Activated T-helper 1 cell treated with anti-CD3 and anti-CD28 coated beads, Interleukin-12 subunit alpha, Interleukin-12 subunit beta, Interleukin-2, Interleukin-4 antibody, amounts not matched to agents 30 ng/mL and 10 ng/mL and 1 ng/mL, durations not matched to agents 14 hours and 24 hours and 36 hours (primary cell): ENCODE measurements at regions of chr19 and their contacts with region 1.

Region 1: DNA sequence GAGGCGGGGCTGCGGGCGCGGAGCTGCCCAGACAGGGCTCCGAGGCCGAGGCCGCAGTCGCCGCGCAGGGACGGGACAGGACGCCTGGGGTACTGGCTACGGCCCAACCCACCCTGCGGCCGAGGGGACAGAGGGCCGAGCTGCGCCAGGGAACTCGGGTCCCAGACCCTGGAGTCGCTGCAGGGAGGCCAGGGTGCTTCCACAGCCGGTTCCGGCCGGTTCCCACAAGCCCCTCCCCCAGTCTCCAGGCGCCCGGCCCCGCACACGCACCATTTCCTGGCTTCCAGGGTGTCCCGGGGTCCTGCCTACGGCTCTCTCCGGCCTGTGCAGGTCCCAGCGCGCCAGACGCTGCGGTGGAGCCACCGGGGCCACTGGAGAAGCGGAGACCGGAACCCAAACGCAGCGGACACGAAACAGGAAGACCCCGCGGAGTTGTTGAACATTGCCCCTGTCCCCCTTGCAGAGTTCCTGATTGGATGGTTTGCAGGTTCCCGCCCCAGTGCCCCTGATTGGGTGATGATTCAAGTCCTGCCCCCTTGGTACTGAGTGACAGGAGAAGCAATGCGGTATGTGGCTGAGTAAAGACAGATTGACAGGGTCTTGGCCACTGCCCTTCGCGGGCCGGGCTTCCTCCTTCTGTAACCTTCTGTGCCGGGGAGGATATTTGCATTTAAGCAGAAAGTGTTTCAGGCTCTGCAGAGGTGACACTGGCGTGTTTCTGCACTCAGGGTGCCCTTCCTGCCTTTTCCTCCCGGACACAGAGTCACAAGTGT is at the start of gene ZNF564:
- DNase-seq: peak; percentile 92
- H3K4me3 Mint-ChIP-seq: peak within 1 kb of the TSS; percentile 95
- H3K27ac Mint-ChIP-seq: peak within 1 kb of the TSS; percentile 91
- H3K4me1 Mint-ChIP-seq: peaks cover 20% of the 10 kb centered on the region
- H3K27me3 Mint-ChIP-seq: no peaks in the 10 kb centered on the region
- total RNA-seq, gene ZNF564: 7.4 and 8.3 TPM in 2 replicates

Region 2: DNA sequence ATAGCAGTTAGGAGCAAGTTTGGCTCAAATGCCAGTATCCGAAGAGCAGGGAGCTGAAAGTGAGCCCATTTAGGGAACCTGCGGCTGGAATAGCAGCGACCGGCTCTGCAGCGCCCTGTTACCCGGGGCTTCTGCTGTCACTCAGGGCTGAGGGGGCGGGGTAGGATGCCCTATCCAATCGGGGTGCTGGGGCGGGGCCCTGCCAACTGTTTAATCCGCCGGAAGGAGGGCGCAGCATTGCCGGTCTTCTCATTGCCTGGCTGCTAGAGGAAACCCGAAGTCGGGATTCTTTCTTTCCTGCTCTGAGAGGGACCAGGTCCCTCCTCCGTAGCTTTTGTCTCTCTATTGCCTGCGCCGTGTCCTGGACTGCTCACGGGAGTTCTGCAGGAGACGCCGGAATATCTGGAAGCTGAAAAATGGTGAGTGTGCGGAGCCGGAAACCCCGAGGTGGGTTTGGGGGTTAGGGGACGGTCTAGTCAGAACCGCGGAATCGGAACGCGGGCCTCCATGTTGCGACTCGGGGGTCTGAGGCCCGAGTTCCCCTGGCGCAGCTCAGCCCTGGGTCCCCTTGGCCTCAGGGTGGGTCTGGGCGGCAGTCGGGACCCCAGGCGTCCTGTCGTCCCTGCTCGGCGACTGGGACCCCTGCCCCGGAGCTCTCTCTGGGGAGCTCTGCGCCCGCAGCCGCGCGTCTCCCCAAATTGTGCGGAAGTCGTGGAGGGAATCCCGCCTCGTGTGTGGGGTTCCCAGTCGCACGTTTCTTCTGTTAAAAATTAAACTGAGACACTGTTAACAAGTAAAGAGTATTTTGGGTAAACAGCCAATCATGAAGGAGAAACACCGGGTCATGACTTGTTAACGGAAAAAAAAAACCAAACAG is 563.6 kb before region 1 on chr19:
- intact Hi-C with region 1: loop called (anchors 5 kb)
- DNase-seq: peak; percentile 81
- H3K4me3 Mint-ChIP-seq: peak overlapping the region; percentile 98
- H3K27ac Mint-ChIP-seq: peak overlapping the region; percentile 94
- H3K4me1 Mint-ChIP-seq: peaks cover 20% of the 10 kb centered on the region
- H3K27me3 Mint-ChIP-seq: no peaks in the 10 kb centered on the region

Region 3: GRCh38 chr19:12294249-12295158 is 256.7 kb before region 1 on chr19 and contains the start of gene ZNF44:
- intact Hi-C with region 1: loop called (anchors 2 kb)
- DNase-seq: peak; percentile 95
- H3K4me3 Mint-ChIP-seq: peak within 1 kb of the TSS; percentile 100
- H3K27ac Mint-ChIP-seq: peak within 1 kb of the TSS; percentile 99
- H3K4me1 Mint-ChIP-seq: peaks cover 34% of the 10 kb centered on the region
- H3K27me3 Mint-ChIP-seq: no peaks in the 10 kb centered on the region
- total RNA-seq, gene ZNF44: 7.4 and 10.3 TPM in 2 replicates

Region 4: DNA sequence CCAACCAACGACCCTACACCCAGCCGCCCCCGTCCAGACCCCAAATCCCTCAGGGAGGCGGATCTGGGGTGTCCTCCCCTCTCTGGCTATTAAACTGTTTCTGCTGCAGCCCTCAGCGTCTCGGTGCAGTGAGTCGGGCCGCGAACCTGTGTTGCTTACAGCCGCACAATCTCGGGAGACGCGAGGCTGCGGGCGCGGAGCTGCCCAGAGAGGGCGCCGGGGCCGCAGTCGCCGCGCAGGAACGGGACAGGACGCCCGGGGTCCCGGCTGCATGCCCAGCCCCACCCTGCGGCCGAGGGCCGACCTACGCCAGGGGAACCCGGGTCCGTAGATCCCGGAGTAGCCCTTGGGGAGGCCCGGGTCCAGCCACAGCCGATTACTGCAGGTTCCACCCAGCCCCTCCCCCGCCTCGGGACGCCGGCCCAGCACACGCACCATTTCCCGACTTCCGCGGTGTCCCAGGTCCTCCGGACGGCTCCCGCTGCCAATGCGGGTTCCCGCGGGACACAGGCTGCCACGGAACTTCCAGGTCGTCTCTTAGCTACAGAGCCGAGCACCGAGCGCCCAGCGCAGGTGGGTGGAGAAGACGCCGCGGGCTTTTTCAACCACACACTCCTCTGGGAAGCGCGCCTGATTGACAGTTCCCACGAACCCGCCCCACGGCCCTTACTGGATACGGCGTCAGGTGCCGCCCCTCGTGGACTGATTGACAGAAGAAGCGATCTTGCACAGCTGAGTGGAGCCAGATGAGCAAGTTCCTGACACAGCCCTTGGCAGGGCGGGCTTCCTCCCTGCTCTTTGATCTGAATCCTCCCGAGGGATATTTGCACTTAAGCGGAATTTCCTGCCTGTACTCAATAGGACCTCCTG is 150.4 kb before region 1 on chr19 and contains the start of gene ZNF799:
- intact Hi-C with region 1: loop called (anchors 2 kb)
- DNase-seq: peak; percentile 81
- H3K4me3 Mint-ChIP-seq: peak within 1 kb of the TSS; percentile 93
- H3K27ac Mint-ChIP-seq: peak within 1 kb of the TSS; percentile 68
- H3K4me1 Mint-ChIP-seq: peaks cover 24% of the 10 kb centered on the region
- H3K27me3 Mint-ChIP-seq: no peaks in the 10 kb centered on the region
- total RNA-seq, gene ZNF799: 3.1 TPM in 2 replicates

Region 5: GRCh38 chr19:12484371-12485051 is 66.7 kb before region 1 on chr19 and contains the start of gene ZNF709:
- intact Hi-C with region 1: loop called (anchors 1 kb)
- DNase-seq: peak; percentile 79
- H3K4me3 Mint-ChIP-seq: peak within 1 kb of the TSS; percentile 91
- H3K27ac Mint-ChIP-seq: peak within 1 kb of the TSS; percentile 35
- H3K4me1 Mint-ChIP-seq: peaks cover 27% of the 10 kb centered on the region
- H3K27me3 Mint-ChIP-seq: no peaks in the 10 kb centered on the region
- total RNA-seq, gene ZNF709: 0.26 TPM in 1 of 2 replicates, not detected in the other

Region 6: DNA sequence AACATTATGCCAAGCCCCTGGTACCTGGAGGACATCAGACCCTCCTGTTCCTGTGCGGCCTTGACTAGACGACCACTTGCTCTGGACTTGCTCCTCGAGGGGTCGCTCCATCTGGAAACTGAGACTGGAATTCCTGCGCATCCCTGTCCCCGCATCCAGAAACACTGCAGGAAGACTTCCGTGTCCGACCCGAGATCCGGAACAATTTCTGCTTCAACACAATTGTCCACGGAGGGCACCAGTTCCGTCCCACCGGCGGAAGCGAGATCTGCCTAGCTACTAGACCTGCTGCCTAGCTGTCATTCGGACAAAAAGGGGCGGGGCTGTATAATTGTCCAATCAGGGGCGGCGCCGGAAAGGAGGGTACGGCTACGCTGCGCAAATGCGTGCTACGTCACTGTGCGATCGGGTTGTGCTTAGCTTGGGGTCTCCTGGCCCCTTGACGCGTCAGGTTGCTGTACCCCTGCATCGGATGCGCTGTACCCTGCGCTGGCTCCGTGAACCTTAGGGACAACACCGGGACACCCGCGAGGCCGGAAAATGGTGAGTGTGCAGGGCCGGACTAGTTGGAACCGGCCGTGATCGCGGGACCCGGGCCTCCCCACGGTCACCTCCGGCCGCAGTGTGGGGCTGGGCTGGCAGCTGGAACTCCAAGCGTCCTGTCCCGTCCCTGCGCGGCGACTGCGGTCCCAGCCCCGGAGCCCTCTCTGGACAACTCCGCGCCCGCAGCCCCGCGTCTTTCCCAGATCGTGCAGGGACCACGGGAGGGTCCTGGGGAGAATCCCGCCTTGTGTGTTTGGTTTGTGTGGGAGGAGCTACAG is 59.5 kb after region 1 on chr19 and contains the starts of genes ZNF490 and ZNF791:
- intact Hi-C with region 1: loop called (anchors 1 kb)
- DNase-seq: peak; percentile 96
- H3K4me3 Mint-ChIP-seq: peak within 1 kb of the TSS; percentile 100
- H3K27ac Mint-ChIP-seq: peak within 1 kb of the TSS; percentile 99
- H3K4me1 Mint-ChIP-seq: peaks cover 22% of the 10 kb centered on the region
- H3K27me3 Mint-ChIP-seq: no peaks in the 10 kb centered on the region
- total RNA-seq, gene ZNF490: 9.2 and 9.4 TPM in 2 replicates
- total RNA-seq, gene ZNF791: 23.5 and 29.0 TPM in 2 replicates